ENCODE measurements at regions of chr5 and their contacts with region 1.

Region 1: GRCh38 chr5:76175051-76175666 is 92.0 kb downstream of the SV2C start:
- DNase-seq: peak; percentile 80
- H3K27ac ChIP-seq: no peak overlapping the region
- CTCF ChIP-seq: peak; percentile 94

Region 2: GRCh38 chr5:76154009-76154690 is 21.0 kb before region 1 on chr5:
- CTCF ChIA-PET with region 1: interaction called, 14 read pairs
- POLR2A ChIA-PET with region 1: no interaction called
- DNase-seq: no peak
- H3K27ac ChIP-seq: no peak overlapping the region
- CTCF ChIP-seq: no peak